Naive thymus-derived CD8-positive, alpha-beta T cell (primary cell): ENCODE measurements at regions of chr1 and their contacts with region 1.

Region 1: GRCh38 chr1:225845571-225846259 is 35.8 kb downstream of the EPHX1 start:
- DNase-seq: peak in 3 of 10 donors; percentile 30 to 38 (median 35)
- ATAC-seq: no peak
- H3K4me3 Mint-ChIP-seq: peak overlapping the region in 2 of 10 donors; percentile 6 to 19
- H3K27ac Mint-ChIP-seq: peak overlapping the region in 9 of 10 donors; percentile 46 to 96 (median 81)
- H3K4me1 Mint-ChIP-seq: peaks cover 38 to 80% (median 71%) of the 10 kb centered on the region in 4 donors
- H3K27me3 Mint-ChIP-seq: no peaks in the 10 kb centered on the region

Region 2: DNA sequence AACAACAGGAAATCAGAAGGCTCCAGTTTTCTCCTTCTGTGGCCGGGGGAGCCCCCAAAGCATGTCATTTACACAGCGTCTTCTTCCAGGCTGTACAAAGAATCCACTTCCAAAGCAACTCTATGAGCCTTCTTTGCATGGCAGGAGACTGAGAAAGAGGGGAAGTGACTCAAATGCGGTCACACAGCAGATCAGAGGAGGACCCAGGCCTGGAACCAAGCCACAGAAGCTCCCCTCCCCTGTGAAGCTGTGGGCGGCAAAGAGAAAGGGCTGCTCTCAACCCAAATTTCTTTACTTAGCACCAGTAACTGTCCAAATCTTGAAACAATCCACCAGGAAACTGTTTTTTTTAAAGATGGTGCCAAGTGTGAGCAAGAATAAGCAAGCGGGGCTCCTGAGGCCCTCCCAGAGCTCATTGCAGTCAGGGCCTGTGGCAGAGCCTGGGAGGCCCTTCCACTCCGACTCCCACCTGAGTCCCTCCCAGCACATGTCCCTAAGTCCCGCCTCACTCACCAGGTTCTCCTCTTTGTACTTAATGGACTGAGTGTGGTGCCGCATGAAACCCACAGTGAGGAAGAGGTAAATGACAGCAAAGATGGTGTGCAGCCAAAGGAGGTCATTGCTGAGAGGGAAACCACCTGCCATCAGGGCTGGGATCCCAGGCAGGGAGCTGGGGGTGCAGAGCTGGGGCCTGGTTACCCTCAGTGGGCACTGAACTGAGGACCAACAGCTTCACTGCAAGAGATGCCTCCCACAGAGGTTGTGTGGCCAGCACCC is 20.5 kb after region 1 on chr1:
- POLR2A ChIA-PET with region 1: interaction called, 35 read pairs
- DNase-seq: peak; percentile 36 to 87 (median 76)
- ATAC-seq: peak; percentile 89 to 94
- H3K4me3 Mint-ChIP-seq: peak overlapping the region; percentile 53 to 82 (median 74)
- H3K27ac Mint-ChIP-seq: peak overlapping the region; percentile 82 to 95 (median 90)
- H3K4me1 Mint-ChIP-seq: peaks cover 22 to 56% (median 44%) of the 10 kb centered on the region in 4 donors
- H3K27me3 Mint-ChIP-seq: no peaks in the 10 kb centered on the region

Region 3: GRCh38 chr1:225911191-225912130 is 65.7 kb after region 1 on chr1:
- POLR2A ChIA-PET with region 1: interaction called, 11 read pairs
- DNase-seq: peak; percentile 51 to 85 (median 76)
- ATAC-seq: peak; percentile 94 to 96
- H3K4me3 Mint-ChIP-seq: peak overlapping the region in 5 of 10 donors; percentile 14 to 62 (median 25)
- H3K27ac Mint-ChIP-seq: peak overlapping the region in 9 of 10 donors; percentile 19 to 84 (median 73)
- H3K4me1 Mint-ChIP-seq: peaks cover 25 to 56% (median 39%) of the 10 kb centered on the region in 4 donors
- H3K27me3 Mint-ChIP-seq: no peaks in the 10 kb centered on the region